K562 (cell line): ENCODE measurements at regions of chr16 and their contacts with region 1.

Region 1: GRCh38 chr16:69565671-69566239 is at the start of gene NFAT5:
- DNase-seq: peak; percentile 92 to 94 (median 92)
- ATAC-seq: peak; percentile 79
- H3K4me3 ChIP-seq: peak within 1 kb of the TSS; percentile 98
- H3K27ac ChIP-seq: peak within 1 kb of the TSS; percentile 97
- H3K4me1 ChIP-seq: peaks cover 9 to 20% of the 10 kb centered on the region in 2 experiments
- H3K27me3 ChIP-seq: no peaks in the 10 kb centered on the region
- CTCF ChIP-seq: peak in 1 of 3 experiments; percentile 18; a peak in 3 of 6 replicates
- EP300 ChIP-seq: peak; percentile 100
- POLR2A ChIP-seq: peak; percentile 91
- RAD21 ChIP-seq: peak; percentile 14 to 24; a peak in 1 of 4 replicates
- polyA plus RNA-seq, gene NFAT5: 0.78 to 1.6 TPM

Region 2: DNA sequence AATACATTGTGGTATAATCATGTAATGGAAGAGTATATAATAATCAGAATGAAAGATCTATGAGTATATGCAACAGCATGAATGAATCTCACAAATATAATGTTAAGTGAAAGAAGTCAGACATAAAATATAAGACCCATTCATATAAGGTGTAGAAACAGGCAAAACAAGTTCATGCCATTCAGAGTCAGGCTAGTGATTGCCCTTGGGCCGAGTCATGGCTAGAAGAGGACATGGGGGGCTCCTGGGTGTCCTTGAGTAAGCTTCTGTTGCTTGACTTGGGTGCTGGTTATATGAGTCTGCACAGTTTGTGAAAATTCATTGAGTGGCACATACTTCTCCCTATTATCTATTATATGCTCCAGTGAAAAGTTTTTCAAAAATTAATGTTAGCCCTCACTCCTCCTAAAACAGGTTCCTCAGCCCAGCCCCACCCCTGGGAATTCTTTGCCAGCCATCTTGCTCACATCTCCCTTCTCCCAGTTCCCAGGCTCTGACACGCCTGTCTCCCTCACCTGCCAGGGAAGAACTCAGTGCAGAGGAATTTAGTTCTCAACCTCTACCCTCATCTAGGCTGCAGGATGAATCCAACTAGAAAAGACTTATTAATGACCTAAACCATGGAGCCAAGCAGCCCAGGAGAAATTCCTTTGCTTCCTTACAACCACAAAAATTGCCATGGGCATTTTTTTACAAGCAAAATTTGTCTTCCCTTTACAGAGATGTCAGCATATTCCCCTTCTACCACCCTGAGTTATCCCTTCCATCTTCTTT is 52.4 kb before region 1 on chr16:
- CTCF ChIA-PET with region 1: no interaction called
- POLR2A ChIA-PET with region 1: no interaction called
- in situ Hi-C with region 1: no loop called
- intact Hi-C with region 1: no loop called
- DNase-seq: no peak
- ATAC-seq: no peak
- H3K4me3 ChIP-seq: no peak overlapping the region
- H3K27ac ChIP-seq: no peak overlapping the region
- H3K4me1 ChIP-seq: no peaks in the 10 kb centered on the region; a peak in 2 of 5 replicates
- H3K27me3 ChIP-seq: no peaks in the 10 kb centered on the region
- CTCF ChIP-seq: no peak
- EP300 ChIP-seq: no peak
- POLR2A ChIP-seq: no peak
- RAD21 ChIP-seq: no peak

Region 3: GRCh38 chr16:69531988-69532387 is 33.8 kb before region 1 on chr16:
- CTCF ChIA-PET with region 1: no interaction called
- POLR2A ChIA-PET with region 1: interaction called, 4 read pairs
- in situ Hi-C with region 1: no loop called
- intact Hi-C with region 1: loop called (anchors 2 kb)
- DNase-seq: no peak
- ATAC-seq: no peak
- H3K4me3 ChIP-seq: no peak overlapping the region
- H3K27ac ChIP-seq: no peak overlapping the region
- H3K4me1 ChIP-seq: peaks cover 19 to 25% of the 10 kb centered on the region in 2 experiments
- H3K27me3 ChIP-seq: no peaks in the 10 kb centered on the region
- CTCF ChIP-seq: no peak
- EP300 ChIP-seq: no peak
- POLR2A ChIP-seq: no peak
- RAD21 ChIP-seq: no peak

Region 4: DNA sequence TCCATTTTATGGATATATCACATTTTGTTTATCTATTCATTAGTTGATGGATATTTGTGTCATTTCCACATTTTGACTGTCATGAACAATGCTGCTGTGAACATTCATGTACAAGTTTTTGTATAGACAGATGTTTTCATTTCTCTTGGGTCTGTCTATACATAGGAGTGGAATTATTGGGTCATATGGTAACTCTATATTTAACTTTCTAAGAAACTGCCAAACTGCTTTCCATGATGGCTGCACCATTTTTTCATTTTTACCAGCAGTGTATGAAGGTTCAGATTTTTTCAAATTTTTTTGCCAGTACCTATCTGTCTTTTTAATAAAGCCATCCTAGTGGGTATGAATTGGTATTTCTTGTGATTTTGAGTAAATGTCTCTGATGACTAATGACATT is 15.5 kb after region 1 on chr16:
- CTCF ChIA-PET with region 1: no interaction called
- POLR2A ChIA-PET with region 1: interaction called, 31 read pairs
- in situ Hi-C with region 1: no loop called
- intact Hi-C with region 1: no loop called
- DNase-seq: no peak
- ATAC-seq: no peak
- H3K4me3 ChIP-seq: no peak overlapping the region
- H3K27ac ChIP-seq: no peak overlapping the region
- H3K4me1 ChIP-seq: no peaks in the 10 kb centered on the region
- H3K27me3 ChIP-seq: no peaks in the 10 kb centered on the region
- CTCF ChIP-seq: no peak
- EP300 ChIP-seq: no peak
- POLR2A ChIP-seq: no peak
- RAD21 ChIP-seq: no peak

Region 5: DNA sequence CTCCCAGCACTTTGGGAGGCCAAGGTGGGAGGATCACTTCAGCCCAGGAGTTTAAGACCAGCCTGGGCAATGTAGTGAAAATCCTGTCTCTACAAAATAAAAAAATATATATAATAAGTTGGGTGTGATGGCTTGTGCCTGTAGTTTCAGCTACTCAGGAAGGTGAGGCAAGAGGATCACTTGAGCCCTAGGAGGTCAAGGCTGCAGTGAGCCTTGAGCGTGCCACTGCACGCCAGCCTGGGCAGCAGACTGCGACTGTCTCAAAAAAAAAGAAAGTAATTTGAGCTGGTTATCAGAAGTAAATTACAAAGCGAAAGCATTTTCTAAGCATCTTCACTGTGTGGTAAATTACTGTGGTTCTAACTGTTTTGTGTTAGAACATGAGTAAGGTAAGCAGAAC is 94.4 kb after region 1 on chr16:
- CTCF ChIA-PET with region 1: no interaction called
- POLR2A ChIA-PET with region 1: no interaction called
- in situ Hi-C with region 1: no loop called
- intact Hi-C with region 1: no loop called
- DNase-seq: no peak
- ATAC-seq: no peak
- H3K4me3 ChIP-seq: no peak overlapping the region
- H3K27ac ChIP-seq: no peak overlapping the region
- H3K4me1 ChIP-seq: no peaks in the 10 kb centered on the region
- H3K27me3 ChIP-seq: no peaks in the 10 kb centered on the region
- CTCF ChIP-seq: no peak
- EP300 ChIP-seq: no peak
- POLR2A ChIP-seq: no peak
- RAD21 ChIP-seq: no peak

Region 6: GRCh38 chr16:69672998-69673713 is 107.4 kb after region 1 on chr16:
- CTCF ChIA-PET with region 1: no interaction called
- POLR2A ChIA-PET with region 1: no interaction called
- in situ Hi-C with region 1: no loop called
- intact Hi-C with region 1: no loop called
- DNase-seq: no peak
- ATAC-seq: no peak
- H3K4me3 ChIP-seq: no peak overlapping the region
- H3K27ac ChIP-seq: no peak overlapping the region
- H3K4me1 ChIP-seq: no peaks in the 10 kb centered on the region
- H3K27me3 ChIP-seq: no peaks in the 10 kb centered on the region
- CTCF ChIP-seq: no peak
- EP300 ChIP-seq: no peak
- POLR2A ChIP-seq: no peak
- RAD21 ChIP-seq: no peak